ENCODE measurements at regions of chr19 and their contacts with region 1.

Region 1: GRCh38 chr19:9075064-9075949 is 11.6 kb upstream of the OR1M1 start:
- DNase-seq: peak; percentile 73 to 74
- H3K4me3 ChIP-seq: no peak overlapping the region
- H3K27ac ChIP-seq: peak overlapping the region in 2 of 3 donors; percentile 10 to 45
- H3K4me1 ChIP-seq: peaks cover 5 to 15% of the 10 kb centered on the region in 2 donors
- H3K27me3 ChIP-seq: no peaks in the 10 kb centered on the region
- CTCF ChIP-seq: no peak
- POLR2A ChIP-seq: no peak

Region 2: DNA sequence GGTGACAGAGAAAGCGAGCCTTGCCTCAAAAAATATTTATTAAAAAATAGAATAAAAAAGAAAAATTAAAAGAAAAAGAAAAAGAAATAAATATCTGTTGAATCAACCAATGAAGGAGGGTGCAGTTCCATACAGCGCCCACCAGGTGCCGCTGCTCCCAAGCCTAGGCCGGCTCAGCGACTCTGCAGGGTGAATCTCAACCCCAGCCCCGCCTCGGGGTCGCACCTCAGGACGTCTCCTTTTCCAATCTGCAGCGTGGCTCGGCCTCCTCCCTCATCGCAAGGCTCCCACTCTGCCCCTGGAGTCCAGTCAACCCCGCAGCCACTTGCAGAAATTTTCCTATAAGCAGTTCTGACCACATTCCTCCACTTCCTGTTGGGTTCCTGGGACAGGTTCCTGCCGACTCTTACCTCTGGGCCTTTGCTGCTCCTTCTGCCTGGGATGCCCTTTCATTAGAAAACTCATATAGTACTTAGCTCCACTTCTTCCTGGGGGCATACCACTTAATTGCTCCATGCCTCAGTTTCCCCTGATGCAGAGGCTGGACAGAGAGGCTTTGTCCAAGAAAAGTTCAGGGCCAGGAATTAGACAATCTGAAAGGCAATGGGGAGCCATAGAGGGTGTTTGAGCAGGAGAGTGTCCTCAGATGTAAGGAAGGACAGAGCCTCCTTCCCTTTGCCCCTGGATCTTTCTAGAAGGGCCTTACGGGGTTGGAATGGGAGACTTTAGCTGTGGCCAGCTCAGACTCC is 420.5 kb before region 1 on chr19:
- intact Hi-C with region 1: loop called (anchors 10 kb)
- DNase-seq: peak; percentile 32 to 35
- H3K4me3 ChIP-seq: no peak overlapping the region
- H3K27ac ChIP-seq: no peak overlapping the region
- H3K4me1 ChIP-seq: peaks cover 0 to 5% of the 10 kb centered on the region in 2 donors
- H3K27me3 ChIP-seq: no peaks in the 10 kb centered on the region
- CTCF ChIP-seq: peak; percentile 77 to 99 (median 92)
- POLR2A ChIP-seq: no peak

Measured in thyroid gland (tissue), 4 donors.